Astrocyte of the cerebellum (primary cell): ENCODE measurements at regions of chrX and their contacts with region 1.

Region 1: DNA sequence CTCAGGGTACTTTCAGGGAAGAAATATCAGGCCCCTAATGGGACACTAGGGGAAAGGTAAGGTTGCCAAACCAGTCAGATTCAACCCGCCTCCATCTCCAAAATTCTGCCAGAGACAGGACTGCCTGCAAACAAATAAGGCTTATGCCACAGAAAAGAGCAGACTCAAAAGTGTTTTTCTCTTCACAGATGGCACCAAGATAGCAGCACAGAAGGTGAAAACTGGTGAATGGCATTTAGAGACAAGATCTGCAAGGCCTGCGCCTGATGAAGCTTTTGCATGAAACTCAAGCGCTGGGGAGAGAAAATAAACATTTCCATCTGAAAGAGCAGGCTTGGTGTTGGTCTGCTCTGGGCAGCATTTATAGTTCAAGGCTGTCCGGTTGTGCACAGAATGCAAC is 27.9 kb downstream of the AMOT start:
- DNase-seq: no peak
- H3K4me3 ChIP-seq: no peak overlapping the region
- CTCF ChIP-seq: no peak

Region 2: DNA sequence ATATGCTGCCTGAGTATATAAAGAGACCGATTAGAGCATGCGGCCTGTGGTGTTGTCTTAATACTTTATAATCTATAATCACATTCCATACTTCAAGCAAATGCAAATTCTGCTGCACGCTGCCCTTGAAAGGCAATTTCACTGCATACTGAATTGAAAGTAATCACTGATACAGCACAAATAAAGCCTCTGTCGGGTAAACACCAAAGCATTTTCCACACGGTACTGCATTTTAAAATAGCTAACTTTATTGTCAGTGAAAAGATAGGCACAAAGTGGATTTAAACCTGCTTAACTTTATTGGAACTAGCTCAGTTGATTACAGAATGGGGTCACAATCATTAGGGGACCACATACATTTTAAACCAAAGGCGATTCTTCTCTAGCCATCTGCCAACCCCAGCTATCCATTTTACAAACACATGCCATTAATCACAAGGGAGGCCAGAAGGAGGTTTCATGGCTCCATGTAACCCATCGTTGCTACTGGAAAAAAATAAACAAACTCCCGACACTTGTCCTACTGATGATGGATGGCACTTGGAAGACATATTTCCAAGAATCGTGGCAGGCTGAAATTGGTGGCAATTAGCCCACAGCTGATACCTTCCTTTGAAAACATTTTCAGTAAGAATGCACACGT is 38.0 kb before region 1 on chrX:
- in situ Hi-C with region 1: loop called (anchors 5 kb)
- DNase-seq: no peak
- H3K4me3 ChIP-seq: no peak overlapping the region
- CTCF ChIP-seq: no peak